ENCODE measurements at regions of chr18 and their contacts with region 1.

Region 1: DNA sequence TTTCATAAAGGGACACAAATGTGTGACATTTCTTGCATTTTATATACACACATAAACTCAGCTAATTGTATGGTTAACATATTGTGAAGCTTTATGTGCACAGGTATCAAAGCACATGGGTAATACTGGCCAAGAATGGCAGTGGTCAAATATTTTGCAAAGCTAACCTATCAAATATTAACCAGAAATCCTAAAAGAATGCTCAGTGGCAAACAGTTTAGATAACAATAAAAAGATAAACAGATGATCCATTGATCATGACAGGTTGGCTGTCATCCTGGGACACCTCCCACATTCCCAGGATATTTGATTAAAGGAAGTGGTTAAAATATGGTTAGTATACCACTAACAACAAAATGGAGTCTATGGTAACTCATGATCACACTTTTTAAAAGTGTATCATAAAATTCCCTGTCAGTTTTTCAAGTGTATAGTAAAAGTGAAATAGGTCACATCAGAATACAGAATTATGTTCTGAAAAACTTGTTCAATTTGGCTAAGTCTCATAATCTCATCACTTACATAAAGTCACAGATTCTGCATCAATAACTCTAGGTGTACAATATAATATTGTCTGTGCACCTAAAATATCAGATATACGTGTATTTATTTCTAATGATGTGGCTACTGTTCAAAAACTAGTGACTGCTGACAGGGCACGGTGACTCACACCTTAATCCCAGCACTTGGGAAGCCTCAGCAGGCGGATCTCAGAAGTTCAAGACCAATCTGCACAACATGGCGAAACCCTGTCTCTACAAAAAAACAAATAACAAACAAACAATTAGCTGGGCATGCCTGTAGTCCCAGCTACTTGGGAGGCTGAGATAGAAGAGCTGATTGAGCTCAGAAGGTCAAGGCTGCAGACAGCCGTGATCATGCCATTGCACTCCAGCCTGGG is 48.9 kb downstream of the CDH2 start:
- DNase-seq: no peak
- ATAC-seq: no peak
- H3K4me3 ChIP-seq: no peak overlapping the region
- H3K27ac ChIP-seq: no peak overlapping the region
- H3K4me1 ChIP-seq: no peaks in the 10 kb centered on the region
- H3K27me3 ChIP-seq: no peaks in the 10 kb centered on the region
- CTCF ChIP-seq: no peak

Region 2: GRCh38 chr18:28065031-28065792 is 62.8 kb before region 1 on chr18:
- intact Hi-C with region 1: loop called in 1 of 2 experiments (anchors 10 kb)
- DNase-seq: no peak
- ATAC-seq: no peak
- H3K4me3 ChIP-seq: no peak overlapping the region
- H3K27ac ChIP-seq: no peak overlapping the region
- H3K4me1 ChIP-seq: no peaks in the 10 kb centered on the region
- H3K27me3 ChIP-seq: no peaks in the 10 kb centered on the region
- CTCF ChIP-seq: no peak

Measured in left lung (tissue), 14 donors.